Ascending aorta (tissue), 2 donors: ENCODE measurements at regions of chr3 and their contacts with region 1.

Region 1: DNA sequence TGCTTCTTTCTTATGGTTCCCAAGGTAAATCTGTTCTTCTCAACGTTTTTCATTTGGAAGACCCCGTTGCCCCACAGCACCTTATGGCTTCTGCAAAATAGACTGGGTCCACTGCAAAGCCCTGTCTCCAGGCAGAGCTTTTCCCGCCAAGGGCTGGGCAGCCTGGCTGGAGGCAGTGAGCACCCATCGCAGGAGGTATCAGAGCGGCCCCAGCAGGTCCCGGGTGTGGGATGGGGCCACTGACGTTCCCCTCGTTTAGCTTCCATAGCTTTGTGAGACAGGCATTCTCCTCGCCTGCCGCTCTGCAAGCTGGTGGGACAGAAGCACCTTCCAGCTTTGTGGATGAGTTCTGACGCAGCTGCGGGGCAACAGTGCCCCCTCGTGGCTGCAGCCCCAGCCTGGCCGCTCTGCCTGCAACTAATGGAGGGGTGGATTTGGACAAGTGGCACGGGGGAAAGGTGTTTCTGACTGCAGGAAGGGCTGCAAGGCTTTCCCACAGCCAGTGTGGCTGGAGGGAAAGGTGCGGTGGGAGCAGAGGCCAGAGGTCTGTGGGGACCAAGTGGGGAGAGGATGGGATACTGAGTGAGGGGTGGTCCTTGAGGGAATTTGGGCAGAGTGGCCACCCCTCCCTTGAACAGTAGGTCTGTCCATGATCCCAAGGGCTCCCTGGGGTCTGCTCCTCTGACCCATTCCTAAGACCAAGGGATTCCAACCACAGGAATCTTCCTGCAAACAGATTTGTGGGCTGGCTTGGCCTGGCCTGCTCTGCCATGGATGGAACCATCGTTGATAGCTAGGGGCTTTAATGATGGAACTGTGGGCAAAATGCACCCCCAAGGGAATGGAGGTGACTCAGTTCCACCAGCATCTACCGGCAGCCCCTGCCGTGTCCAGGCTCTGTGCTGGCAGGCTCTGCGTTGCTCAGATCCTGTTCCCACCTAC is 99.4 kb downstream of the FBLN2 start:
- DNase-seq: peak in 1 of 2 donors; percentile 88
- H3K4me3 ChIP-seq: no peak overlapping the region
- H3K27ac ChIP-seq: no peak overlapping the region
- H3K4me1 ChIP-seq: peaks cover 0 to 10% of the 10 kb centered on the region in 2 donors
- H3K27me3 ChIP-seq: no peaks in the 10 kb centered on the region
- CTCF ChIP-seq: peak; percentile 89 to 96 (median 92)

Region 2: GRCh38 chr3:12750223-12750622 is 898.1 kb before region 1 on chr3:
- intact Hi-C with region 1: no loop called
- DNase-seq: no peak
- H3K4me3 ChIP-seq: no peak overlapping the region
- H3K27ac ChIP-seq: peak overlapping the region; percentile 22 to 48
- H3K4me1 ChIP-seq: peaks cover 0 to 5% of the 10 kb centered on the region in 2 donors
- H3K27me3 ChIP-seq: no peaks in the 10 kb centered on the region
- CTCF ChIP-seq: no peak

Region 3: GRCh38 chr3:13091898-13092611 is 556.3 kb before region 1 on chr3:
- intact Hi-C with region 1: loop called (anchors 2 kb)
- DNase-seq: peak in 1 of 2 donors; percentile 90
- H3K4me3 ChIP-seq: peak overlapping the region in 1 of 2 donors; percentile 23
- H3K27ac ChIP-seq: no peak overlapping the region
- H3K4me1 ChIP-seq: no peaks in the 10 kb centered on the region
- H3K27me3 ChIP-seq: no peaks in the 10 kb centered on the region
- CTCF ChIP-seq: peak; percentile 88 to 95 (median 94)

Region 4: DNA sequence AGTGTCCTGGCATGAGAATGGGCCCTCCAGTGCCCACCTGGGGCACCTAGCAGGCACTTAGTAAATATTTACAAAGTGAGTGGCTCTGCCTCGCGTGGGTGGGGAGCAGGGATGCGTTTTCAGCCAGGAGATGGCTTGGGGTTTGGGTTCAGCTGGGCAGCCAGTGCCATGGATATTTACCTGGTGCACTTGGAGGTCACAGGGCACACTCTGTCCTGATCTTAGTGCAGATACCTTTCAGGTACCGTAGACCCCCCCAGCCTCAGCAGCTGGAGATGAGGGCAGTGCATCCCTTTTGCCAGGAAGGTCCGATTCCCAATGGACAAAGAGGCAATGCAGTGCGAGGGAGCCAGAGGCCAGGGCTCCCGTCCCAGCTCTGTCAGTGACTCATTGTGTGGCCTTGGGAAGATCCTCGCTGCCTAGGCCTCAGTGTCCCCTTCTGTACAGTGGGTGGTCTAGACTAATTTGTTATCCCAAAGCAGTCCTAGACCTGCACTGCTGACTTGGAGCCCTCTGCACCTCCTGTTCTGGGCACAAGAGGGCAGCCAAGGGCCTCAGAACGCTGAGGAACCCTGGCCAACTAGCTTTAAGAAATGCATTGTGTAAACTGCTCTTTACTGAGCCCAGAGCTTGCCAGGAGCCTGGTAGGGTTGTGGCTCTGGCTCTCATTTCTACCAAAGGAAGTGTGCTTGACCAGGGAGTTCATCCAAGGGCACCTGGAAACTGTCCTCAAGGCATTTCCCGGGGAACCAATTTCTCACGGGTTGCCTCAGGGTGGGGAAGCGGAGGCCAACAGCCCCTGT is 152.2 kb before region 1 on chr3:
- intact Hi-C with region 1: loop called (anchors 1 kb)
- DNase-seq: peak in 1 of 2 donors; percentile 89
- H3K4me3 ChIP-seq: no peak overlapping the region
- H3K27ac ChIP-seq: no peak overlapping the region
- H3K4me1 ChIP-seq: no peaks in the 10 kb centered on the region
- H3K27me3 ChIP-seq: no peaks in the 10 kb centered on the region
- CTCF ChIP-seq: peak; percentile 86 to 96 (median 89)

Region 5: DNA sequence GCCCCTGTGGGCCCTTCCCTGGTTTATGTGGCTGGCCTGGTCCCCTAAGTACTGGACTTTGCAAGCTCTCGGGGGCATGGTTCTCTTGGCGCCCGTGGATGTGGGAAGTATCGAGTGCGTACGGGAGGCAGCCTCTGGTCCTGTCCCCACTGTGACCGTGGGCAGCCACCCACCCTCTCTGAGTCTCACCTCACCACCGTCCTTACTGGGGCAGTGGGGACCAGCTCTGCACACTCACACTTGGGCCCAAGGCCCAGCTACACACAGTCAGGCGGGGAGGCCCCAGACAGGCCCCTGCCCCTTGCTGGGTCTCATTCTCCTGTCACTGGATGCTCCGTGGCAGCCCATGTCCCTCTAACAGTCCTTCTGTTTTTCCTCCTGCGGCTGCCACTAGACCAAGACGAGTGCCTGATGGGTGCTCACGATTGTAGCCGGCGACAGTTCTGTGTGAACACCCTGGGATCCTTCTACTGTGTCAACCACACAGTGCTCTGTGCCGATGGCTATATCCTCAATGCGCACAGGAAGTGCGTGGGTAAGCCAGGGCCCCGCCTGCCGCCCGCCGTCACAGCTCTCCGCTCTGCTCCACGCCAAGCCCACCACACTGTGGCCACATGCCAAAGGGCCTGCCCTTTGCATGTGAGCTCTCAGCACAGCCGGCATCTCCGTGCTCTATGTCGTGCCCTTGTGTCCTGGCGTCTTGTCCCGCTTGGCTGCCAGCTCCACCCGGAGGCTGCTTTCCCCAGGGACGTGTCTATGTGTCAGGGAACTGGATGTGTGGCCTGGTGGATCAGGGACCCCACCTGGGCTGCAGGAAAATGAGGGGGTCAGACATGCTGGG is 26.7 kb before region 1 on chr3:
- intact Hi-C with region 1: no loop called
- DNase-seq: no peak
- H3K4me3 ChIP-seq: no peak overlapping the region
- H3K27ac ChIP-seq: no peak overlapping the region
- H3K4me1 ChIP-seq: no peaks in the 10 kb centered on the region
- H3K27me3 ChIP-seq: no peaks in the 10 kb centered on the region
- CTCF ChIP-seq: no peak

Region 6: GRCh38 chr3:13676356-13677017 is 28.2 kb after region 1 on chr3:
- intact Hi-C with region 1: no loop called
- DNase-seq: no peak
- H3K4me3 ChIP-seq: no peak overlapping the region
- H3K27ac ChIP-seq: no peak overlapping the region
- H3K4me1 ChIP-seq: no peaks in the 10 kb centered on the region
- H3K27me3 ChIP-seq: no peaks in the 10 kb centered on the region
- CTCF ChIP-seq: no peak

Region 7: DNA sequence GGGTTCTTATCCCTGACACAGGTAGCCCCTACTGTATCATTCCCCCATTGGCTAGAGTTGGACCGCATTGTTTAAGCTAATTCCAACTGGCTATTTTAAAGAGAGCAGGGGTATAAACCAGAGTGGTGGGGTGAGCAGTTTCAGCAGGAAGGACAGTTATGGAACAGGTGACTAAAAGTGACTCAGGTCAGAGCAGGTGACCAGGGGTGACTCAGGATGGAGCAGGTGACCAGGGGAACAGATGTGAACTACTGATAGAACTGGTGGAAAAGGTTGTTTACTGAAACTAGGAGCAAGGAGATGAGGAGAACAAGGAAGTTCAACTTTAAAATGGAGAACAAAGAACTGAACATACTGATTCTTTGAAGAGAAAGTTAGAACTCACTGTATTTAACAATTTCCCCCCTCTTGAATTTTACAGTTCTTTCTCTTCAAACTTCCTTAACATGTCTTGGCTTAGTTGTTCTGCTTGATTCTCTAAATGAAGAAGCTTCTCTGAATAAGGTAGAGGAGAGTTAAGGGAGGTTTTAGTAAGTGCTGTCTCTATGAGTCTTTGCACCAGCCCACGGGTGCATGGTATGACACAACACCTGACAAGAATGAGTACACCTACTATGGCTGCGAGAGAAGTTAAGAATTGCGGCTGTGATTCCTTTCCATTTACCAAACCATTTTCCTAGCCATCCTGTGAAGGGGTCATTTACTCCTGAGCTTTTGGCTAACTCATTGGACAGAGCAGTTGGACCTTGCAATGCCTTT is 315.0 kb after region 1 on chr3:
- intact Hi-C with region 1: no loop called
- DNase-seq: no peak
- H3K4me3 ChIP-seq: no peak overlapping the region
- H3K27ac ChIP-seq: no peak overlapping the region
- H3K4me1 ChIP-seq: no peaks in the 10 kb centered on the region
- H3K27me3 ChIP-seq: no peaks in the 10 kb centered on the region
- CTCF ChIP-seq: no peak